HEK293 (cell line): ENCODE measurements at regions of chr14 and their contacts with region 1.

Region 1: GRCh38 chr14:39015360-39015961 is 87.6 kb downstream of the SEC23A start:
- H3K4me3 ChIP-seq: no peak overlapping the region
- H3K27ac ChIP-seq: no peak overlapping the region
- H3K4me1 ChIP-seq: no peaks in the 10 kb centered on the region
- CTCF ChIP-seq: no peak

Region 2: DNA sequence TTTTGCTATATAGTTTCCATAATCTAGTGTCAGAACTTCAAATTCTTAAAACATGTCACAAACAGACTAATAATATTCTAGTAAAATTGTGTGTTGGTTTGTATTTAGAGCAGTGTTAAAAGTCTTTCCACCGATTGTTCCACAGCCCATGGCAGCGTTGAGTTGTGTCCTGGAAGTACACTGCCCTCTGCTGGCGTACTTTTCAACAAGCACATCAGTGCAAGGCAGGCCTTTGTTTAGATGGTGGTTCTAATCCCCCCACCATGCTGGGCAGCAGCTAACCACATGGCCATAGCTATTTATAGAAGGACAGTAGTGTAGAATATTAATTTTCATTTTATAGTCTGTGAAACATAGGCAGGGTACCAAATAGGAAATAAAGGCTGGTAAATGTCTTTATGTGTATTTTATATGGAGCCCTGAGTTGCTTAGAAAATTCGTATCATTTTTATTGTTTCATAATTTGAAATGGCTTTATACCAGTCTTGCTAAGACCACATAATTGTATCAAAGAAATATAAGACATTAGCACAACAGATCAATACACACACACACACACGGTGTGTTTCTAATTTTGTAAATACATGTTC is 147.8 kb before region 1 on chr14:
- CTCF ChIA-PET with region 1: interaction called, 15 read pairs
- POLR2A ChIA-PET with region 1: no interaction called
- H3K4me3 ChIP-seq: no peak overlapping the region
- H3K27ac ChIP-seq: no peak overlapping the region
- H3K4me1 ChIP-seq: no peaks in the 10 kb centered on the region
- CTCF ChIP-seq: peak; percentile 26; the same call in 1 of the 2 replicates

Region 3: DNA sequence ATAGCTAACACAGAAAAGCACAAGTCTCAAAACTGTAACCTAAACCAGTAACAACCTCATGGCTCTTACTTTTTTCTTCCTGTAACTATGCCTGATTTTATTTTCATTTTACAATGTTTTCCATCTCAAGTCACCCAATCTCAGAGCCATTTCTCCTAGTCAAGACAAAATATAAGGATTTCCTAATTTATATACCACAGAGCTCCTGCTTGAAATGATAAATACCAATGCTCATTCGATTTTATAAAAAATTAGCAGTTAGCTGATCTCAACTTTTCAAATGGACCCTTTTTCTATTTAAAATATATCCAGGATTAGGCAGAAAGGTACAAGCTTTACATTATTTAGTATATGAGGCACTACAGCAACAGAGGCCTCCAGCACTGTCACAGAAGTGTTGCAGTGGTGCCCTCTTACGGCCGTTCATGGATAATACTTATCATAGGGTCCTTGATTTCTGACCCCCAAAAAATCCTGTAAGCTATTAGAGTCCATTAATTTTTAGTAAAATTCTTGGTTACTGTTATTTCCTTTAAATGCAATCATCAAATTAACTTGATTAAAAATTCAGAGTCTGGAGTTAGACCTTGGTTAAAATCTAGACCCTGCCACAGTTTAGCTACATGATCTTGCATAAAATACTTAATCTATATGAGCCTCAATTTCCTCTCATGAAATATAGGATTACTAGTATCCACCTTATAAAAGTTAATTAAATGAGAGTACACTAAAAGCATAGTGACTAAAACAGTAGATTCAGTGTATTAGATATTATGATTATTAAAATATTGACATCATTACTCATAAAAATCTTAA is 19.2 kb after region 1 on chr14:
- CTCF ChIA-PET with region 1: interaction called, 13 read pairs
- POLR2A ChIA-PET with region 1: no interaction called
- H3K4me3 ChIP-seq: no peak overlapping the region
- H3K27ac ChIP-seq: no peak overlapping the region
- H3K4me1 ChIP-seq: no peaks in the 10 kb centered on the region; the same call in 1 of the 2 replicates
- CTCF ChIP-seq: no peak

Region 4: DNA sequence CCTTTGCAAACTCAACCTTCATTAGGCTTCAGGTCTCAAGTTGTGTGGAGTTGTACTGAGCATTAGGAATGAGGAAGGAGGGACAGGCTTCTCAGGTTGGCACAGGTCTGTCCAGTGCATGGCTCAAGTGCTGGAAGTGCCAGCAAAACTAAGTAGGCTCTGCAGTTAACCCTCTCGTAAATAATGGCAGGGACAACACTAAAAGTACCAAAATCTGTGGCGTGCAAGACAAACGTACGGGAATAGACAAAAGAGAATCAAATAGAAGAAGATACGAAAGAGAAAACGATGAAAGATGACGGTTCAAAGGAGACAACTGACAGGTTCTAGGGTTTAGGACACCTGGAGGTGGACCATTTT is 154.1 kb after region 1 on chr14:
- CTCF ChIA-PET with region 1: no interaction called
- POLR2A ChIA-PET with region 1: no interaction called
- H3K4me3 ChIP-seq: peak overlapping the region; percentile 80
- H3K27ac ChIP-seq: peak overlapping the region; percentile 93
- H3K4me1 ChIP-seq: peaks cover 4% of the 10 kb centered on the region
- CTCF ChIP-seq: no peak

Region 5: DNA sequence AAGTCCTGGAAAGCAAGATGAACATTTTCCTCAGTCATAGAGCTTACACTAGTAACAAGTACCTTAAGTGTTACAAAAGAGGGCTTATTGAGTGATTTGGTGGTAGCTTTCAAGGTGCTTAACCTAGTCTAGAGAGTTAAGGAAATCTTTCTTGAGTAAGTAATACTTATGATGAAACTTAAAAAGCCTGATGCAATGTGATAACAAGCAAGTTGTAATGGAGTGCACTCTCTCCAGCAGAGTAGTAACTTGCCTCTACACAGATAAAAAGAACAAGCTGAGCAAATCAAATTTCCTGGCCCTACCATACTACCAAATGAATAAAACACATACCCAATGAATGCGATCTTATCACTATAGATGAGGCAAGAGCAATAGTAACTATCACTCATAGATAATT is 1056.7 kb after region 1 on chr14:
- CTCF ChIA-PET with region 1: no interaction called
- POLR2A ChIA-PET with region 1: no interaction called
- H3K4me3 ChIP-seq: no peak overlapping the region
- H3K27ac ChIP-seq: no peak overlapping the region
- H3K4me1 ChIP-seq: no peaks in the 10 kb centered on the region
- CTCF ChIP-seq: no peak